ENCODE measurements at regions of chr6 and their contacts with region 1.

Region 1: DNA sequence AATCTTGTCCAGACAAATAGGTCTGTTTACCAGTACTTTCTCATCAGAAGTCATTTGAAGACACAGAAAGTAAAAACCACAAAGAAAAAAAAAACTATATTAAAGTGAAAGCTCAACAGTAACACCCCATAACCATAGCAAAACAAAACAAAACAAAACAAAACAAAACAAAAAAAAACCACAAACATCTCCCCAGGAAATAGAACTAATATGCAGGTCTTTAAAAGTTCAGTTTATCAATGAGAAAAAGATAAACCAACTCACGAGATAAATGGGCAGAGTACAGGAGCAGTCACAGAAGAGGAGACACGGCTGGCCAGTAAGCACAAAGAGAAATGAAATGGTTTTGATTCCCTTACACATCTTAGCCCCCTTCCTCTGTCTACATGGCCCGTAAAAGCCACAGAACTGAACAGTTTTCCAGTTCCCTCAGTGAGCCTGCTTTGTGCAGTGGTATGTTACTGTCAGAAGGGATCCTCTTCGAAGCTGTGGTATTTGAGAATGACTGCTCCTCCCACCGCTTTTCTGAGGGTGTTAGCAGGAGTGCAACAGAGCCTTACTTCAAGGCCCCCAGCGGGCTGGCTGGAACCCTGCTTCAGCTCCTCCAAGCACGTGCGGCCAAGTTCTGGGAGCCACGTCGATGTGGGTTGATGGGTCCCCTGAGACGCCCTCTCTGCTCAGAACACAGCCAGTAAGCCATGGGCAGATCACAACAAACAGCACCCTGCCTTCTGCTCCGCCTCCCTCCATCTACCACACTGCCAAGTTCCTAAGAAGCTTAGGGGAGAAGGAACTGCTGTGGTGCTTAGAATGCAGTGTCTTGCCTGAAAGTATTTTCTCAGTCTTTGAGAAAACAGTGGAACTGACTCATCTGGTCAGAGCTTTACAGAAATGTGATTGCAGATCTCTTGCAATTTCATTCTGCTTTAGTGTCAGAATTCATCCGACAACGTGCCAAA is 14.0 kb downstream of the UST start:
- DNase-seq: peak; percentile 73
- ATAC-seq: peak; percentile 54
- H3K4me3 Mint-ChIP-seq: peak overlapping the region; percentile 84
- H3K27ac Mint-ChIP-seq: peak overlapping the region; percentile 93
- H3K4me1 Mint-ChIP-seq: peaks cover 98% of the 10 kb centered on the region
- H3K27me3 Mint-ChIP-seq: no peaks in the 10 kb centered on the region
- CTCF ChIP-seq: no peak

Region 2: DNA sequence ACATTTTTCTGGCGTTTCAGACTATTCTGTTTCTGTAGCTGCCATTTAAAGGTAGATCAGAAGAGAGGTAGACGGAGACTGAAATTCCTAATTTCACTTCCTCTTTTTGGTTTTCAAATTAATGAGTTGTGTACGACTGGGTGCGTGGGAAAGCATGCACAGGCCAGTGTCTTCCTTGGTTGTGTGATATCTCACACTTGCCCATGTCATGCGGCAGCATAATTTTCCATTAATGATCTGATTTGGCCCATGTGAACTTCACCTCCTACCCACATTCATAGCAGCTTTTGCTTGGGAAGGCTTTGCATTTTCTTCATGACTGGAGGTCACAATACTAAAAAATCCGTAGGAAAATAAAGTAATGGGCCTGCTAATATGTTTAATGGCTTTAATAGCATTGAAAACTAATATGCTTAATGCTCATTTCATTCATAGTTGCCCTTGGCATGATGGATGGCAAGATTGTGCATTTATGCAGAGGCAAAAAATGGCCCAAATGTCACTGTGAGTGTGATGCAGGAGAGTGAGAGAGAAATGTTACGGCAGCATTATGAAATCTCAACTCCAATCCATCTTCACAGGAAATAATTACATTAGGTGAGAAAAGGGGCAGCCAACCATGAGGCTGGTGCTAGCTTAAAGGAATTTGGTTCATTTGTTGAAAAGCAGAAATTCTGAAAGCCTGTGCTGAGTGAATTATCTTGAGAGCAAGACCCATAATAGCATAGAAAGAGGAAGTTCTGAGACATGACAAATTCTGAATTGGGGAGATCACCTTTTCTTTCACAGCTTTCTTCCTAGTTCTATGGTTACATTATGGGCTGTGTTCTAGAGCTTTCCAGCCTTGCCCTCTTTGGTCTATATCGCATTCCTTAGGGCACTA is 83.0 kb before region 1 on chr6:
- CTCF ChIA-PET with region 1: no interaction called
- POLR2A ChIA-PET with region 1: interaction called, 16 read pairs
- intact Hi-C with region 1: loop called (anchors 1 kb)
- DNase-seq: no peak
- ATAC-seq: peak; percentile 76
- H3K4me3 Mint-ChIP-seq: peak overlapping the region; percentile 56
- H3K27ac Mint-ChIP-seq: peak overlapping the region; percentile 86
- H3K4me1 Mint-ChIP-seq: peaks cover 67% of the 10 kb centered on the region
- H3K27me3 Mint-ChIP-seq: no peaks in the 10 kb centered on the region
- CTCF ChIP-seq: no peak

Region 3: DNA sequence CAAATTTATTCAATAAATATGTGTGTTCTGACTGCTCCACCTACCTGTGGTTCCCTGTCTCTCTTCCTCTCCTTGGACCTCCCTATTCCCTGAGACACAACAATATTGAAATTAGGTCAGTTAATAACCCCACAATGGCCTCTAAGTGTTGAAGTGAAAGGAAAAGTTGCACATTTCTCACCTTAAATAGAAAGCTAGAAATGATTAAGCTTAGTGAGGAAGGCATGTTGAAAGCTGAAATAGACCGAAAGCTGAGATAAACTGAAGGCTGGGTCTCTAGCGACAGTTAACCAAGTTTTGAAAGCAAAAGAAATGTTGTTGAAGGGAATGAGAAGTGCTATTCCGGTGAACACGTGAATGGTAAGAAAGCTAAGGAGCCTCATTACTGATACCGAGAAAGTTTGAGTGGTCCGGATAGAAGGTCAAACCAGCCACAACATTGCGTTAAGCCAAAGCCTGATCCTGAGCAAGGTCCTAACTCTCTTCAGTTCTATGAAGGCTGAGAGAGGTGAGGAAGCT is 20.1 kb after region 1 on chr6:
- CTCF ChIA-PET with region 1: interaction called, 4 read pairs
- POLR2A ChIA-PET with region 1: interaction called, 24 read pairs
- intact Hi-C with region 1: loop called (anchors 1 kb)
- DNase-seq: no peak
- ATAC-seq: peak; percentile 65
- H3K4me3 Mint-ChIP-seq: peak overlapping the region; percentile 56
- H3K27ac Mint-ChIP-seq: peak overlapping the region; percentile 69
- H3K4me1 Mint-ChIP-seq: peaks cover 54% of the 10 kb centered on the region
- H3K27me3 Mint-ChIP-seq: no peaks in the 10 kb centered on the region
- CTCF ChIP-seq: no peak

Region 4: DNA sequence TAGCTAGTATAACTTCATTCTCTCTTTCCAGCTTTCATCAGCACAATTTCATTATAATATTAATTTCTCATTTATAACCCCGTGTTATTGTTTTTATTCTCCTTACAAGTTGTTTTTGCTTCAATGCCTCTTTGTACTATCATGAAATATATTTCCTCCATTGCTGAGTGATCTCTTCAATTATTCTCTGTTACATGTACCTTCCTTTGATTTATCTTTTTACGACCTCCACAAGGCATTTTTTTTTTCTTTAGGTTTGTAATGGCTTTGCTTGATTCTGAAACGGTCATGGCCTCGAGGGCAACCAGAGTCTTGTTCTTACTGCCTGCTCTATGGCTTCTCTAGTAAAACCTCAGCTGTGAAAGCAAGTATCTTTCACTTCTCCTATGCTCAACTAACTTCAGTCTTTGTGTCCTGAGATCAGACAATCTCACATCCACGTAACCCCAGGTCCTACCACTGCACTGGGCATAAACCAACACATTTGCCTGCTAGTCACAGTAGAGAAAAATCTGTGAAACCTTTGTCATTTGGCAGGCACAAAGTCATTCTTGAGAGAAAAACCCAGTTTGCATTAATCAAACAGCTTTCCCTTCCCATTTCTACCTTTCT is 105.9 kb after region 1 on chr6:
- CTCF ChIA-PET with region 1: no interaction called
- POLR2A ChIA-PET with region 1: interaction called, 35 read pairs
- intact Hi-C with region 1: loop called (anchors 1 kb)
- DNase-seq: no peak
- ATAC-seq: peak; percentile 93
- H3K4me3 Mint-ChIP-seq: peak overlapping the region; percentile 72
- H3K27ac Mint-ChIP-seq: peak overlapping the region; percentile 92
- H3K4me1 Mint-ChIP-seq: peaks cover 84% of the 10 kb centered on the region
- H3K27me3 Mint-ChIP-seq: no peaks in the 10 kb centered on the region
- CTCF ChIP-seq: no peak

Region 5: DNA sequence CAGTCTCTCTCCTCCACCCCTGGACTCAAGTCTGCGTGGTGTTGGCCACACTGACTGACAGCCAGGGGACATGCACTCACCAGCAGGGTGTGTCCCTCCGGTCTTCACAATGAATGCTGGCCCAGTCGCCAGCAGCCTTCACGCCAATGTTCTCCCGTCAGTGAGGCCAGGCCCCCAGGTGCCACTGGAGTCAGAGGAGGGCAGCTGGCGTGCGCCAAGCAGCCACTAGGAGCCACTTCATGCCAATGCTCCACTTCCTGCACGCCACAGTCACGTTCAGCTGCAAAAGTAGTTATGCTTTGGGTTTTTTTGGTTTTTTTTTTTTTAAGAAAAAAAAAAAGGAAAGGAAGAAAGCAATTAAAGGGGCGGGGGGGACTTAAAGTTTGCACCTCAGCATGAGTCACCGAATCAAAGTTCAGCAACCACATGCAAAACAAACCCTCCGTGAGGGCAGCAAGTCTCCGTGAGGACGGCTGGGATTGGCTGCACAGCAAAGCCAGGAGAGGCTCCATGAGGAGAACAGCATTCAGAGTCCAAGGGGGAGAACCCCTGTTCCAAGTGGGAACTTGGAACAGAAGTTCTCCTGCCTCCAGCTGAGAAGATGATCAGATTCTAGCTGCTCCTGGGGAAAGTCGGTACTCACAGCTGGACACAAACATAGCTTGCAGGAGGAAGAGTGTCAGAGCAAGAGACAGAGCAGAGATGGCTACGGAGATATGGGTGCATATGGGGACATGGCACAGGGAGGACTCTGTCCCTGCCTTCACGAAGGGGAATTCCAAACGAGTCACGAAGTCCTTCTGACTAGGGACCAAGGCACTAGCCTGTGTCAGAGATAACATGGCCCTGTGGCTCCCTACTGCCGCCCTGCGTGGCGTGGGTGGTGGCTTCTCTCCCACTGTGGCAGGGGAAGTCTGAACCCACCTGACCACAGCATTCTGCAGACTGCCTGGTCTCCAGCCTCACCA is 724.2 kb after region 1 on chr6 and contains the start of gene ZC3H12D:
- CTCF ChIA-PET with region 1: no interaction called
- POLR2A ChIA-PET with region 1: interaction called, 7 read pairs
- intact Hi-C with region 1: loop called (anchors 2 kb)
- DNase-seq: peak; percentile 75
- ATAC-seq: peak; percentile 47
- H3K4me3 Mint-ChIP-seq: peak within 1 kb of the TSS; percentile 97
- H3K27ac Mint-ChIP-seq: peak within 1 kb of the TSS; percentile 99
- H3K4me1 Mint-ChIP-seq: peaks cover 87% of the 10 kb centered on the region
- H3K27me3 Mint-ChIP-seq: no peaks in the 10 kb centered on the region
- CTCF ChIP-seq: no peak
- total RNA-seq, gene ZC3H12D: 184 and 225 TPM in 2 replicates